Activated CD8-positive, alpha-beta T cell treated with anti-CD3 and anti-CD28 coated beads for 36 hours (primary cell): ENCODE measurements at regions of chr7 and their contacts with region 1.

Region 1: GRCh38 chr7:24819916-24820689 is 62.8 kb upstream of the GSDME start:
- DNase-seq: peak; percentile 91
- ATAC-seq: peak; percentile 49
- H3K4me3 Mint-ChIP-seq: peak overlapping the region; percentile 50
- H3K27ac Mint-ChIP-seq: peak overlapping the region; percentile 97
- H3K4me1 Mint-ChIP-seq: peaks cover 36% of the 10 kb centered on the region
- H3K27me3 Mint-ChIP-seq: no peaks in the 10 kb centered on the region
- CTCF ChIP-seq: peak; percentile 90

Region 2: DNA sequence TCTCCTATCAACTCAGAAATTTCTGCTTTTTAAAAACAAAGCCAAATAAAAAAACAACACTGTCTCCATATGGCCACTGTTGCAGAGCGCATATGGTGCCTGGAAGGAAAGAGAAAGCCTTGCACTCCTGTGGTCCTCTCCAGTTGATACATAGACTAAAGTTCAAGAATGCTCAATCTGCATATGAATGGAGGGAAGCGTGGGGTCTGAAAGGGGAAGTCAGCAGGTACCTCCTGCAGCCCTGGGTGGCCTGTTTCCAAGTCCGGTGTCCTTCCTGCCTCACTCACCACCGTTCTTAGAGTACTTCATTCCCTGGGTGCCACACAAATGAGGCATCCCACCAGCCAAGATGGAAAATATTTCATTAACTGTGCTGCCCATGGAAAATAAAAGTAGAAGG is 385.1 kb before region 1 on chr7:
- CTCF ChIA-PET with region 1: no interaction called
- POLR2A ChIA-PET with region 1: no interaction called
- intact Hi-C with region 1: no loop called
- DNase-seq: no peak
- ATAC-seq: no peak
- H3K4me3 Mint-ChIP-seq: no peak overlapping the region
- H3K27ac Mint-ChIP-seq: no peak overlapping the region
- H3K4me1 Mint-ChIP-seq: no peaks in the 10 kb centered on the region
- H3K27me3 Mint-ChIP-seq: no peaks in the 10 kb centered on the region
- CTCF ChIP-seq: no peak

Region 3: GRCh38 chr7:24732646-24733413 is 87.3 kb before region 1 on chr7:
- CTCF ChIA-PET with region 1: no interaction called
- POLR2A ChIA-PET with region 1: no interaction called
- intact Hi-C with region 1: no loop called
- DNase-seq: peak; percentile 16
- ATAC-seq: no peak
- H3K4me3 Mint-ChIP-seq: no peak overlapping the region
- H3K27ac Mint-ChIP-seq: no peak overlapping the region
- H3K4me1 Mint-ChIP-seq: peaks cover 22% of the 10 kb centered on the region
- H3K27me3 Mint-ChIP-seq: peaks cover 32% of the 10 kb centered on the region
- CTCF ChIP-seq: no peak

Region 4: GRCh38 chr7:24831240-24831639 is 11.1 kb after region 1 on chr7:
- CTCF ChIA-PET with region 1: interaction called, 21 read pairs
- POLR2A ChIA-PET with region 1: no interaction called
- intact Hi-C with region 1: no loop called
- DNase-seq: no peak
- ATAC-seq: no peak
- H3K4me3 Mint-ChIP-seq: no peak overlapping the region
- H3K27ac Mint-ChIP-seq: no peak overlapping the region
- H3K4me1 Mint-ChIP-seq: peaks cover 55% of the 10 kb centered on the region
- H3K27me3 Mint-ChIP-seq: no peaks in the 10 kb centered on the region
- CTCF ChIP-seq: no peak

Region 5: DNA sequence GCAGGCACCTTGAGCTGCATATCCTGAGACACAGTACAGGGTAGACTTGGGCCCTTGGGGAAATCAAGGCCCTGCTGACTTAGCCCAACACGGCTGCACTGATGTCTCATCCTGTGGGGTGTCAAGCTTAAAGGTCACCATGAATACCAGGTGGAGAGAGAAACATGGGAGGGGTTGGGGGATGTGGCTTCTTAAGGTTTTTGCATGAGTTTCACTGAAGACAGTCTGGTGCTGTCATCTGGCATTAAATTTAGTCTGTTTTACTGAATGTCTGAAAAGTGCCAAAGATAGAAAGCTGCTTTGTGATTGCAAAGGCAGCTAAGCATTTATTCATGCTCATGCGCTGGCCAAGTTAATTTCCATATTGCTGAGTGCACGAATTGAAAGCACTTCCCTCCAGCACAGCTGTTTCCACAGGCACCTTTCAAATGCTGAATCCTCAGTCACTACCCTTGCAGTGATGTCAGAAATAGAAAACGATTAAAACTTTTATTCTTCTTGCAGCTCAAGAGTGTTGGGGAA is 57.7 kb after region 1 on chr7:
- CTCF ChIA-PET with region 1: interaction called, 11 read pairs
- POLR2A ChIA-PET with region 1: no interaction called
- intact Hi-C with region 1: no loop called
- DNase-seq: peak; percentile 67
- ATAC-seq: peak; percentile 95
- H3K4me3 Mint-ChIP-seq: peak overlapping the region; percentile 34
- H3K27ac Mint-ChIP-seq: peak overlapping the region; percentile 79
- H3K4me1 Mint-ChIP-seq: peaks cover 37% of the 10 kb centered on the region
- H3K27me3 Mint-ChIP-seq: no peaks in the 10 kb centered on the region
- CTCF ChIP-seq: no peak

Region 6: GRCh38 chr7:24907311-24907886 is 87.3 kb after region 1 on chr7:
- CTCF ChIA-PET with region 1: interaction called, 7 read pairs
- POLR2A ChIA-PET with region 1: interaction called, 5 read pairs
- intact Hi-C with region 1: loop called (anchors 2 kb)
- DNase-seq: peak; percentile 43
- ATAC-seq: peak; percentile 73
- H3K4me3 Mint-ChIP-seq: no peak overlapping the region
- H3K27ac Mint-ChIP-seq: no peak overlapping the region
- H3K4me1 Mint-ChIP-seq: peaks cover 51% of the 10 kb centered on the region
- H3K27me3 Mint-ChIP-seq: no peaks in the 10 kb centered on the region
- CTCF ChIP-seq: no peak

Region 7: GRCh38 chr7:24979863-24980533 is 159.9 kb after region 1 on chr7 and contains the start of gene OSBPL3:
- CTCF ChIA-PET with region 1: interaction called, 72 read pairs
- POLR2A ChIA-PET with region 1: interaction called, 19 read pairs
- intact Hi-C with region 1: loop called (anchors 2 kb)
- DNase-seq: peak; percentile 96
- ATAC-seq: peak; percentile 90
- H3K4me3 Mint-ChIP-seq: peak within 1 kb of the TSS; percentile 83
- H3K27ac Mint-ChIP-seq: peak within 1 kb of the TSS; percentile 89
- H3K4me1 Mint-ChIP-seq: peaks cover 53% of the 10 kb centered on the region
- H3K27me3 Mint-ChIP-seq: no peaks in the 10 kb centered on the region
- CTCF ChIP-seq: peak; percentile 7
- total RNA-seq, gene OSBPL3: 44.6 to 45.7 TPM

Region 8: DNA sequence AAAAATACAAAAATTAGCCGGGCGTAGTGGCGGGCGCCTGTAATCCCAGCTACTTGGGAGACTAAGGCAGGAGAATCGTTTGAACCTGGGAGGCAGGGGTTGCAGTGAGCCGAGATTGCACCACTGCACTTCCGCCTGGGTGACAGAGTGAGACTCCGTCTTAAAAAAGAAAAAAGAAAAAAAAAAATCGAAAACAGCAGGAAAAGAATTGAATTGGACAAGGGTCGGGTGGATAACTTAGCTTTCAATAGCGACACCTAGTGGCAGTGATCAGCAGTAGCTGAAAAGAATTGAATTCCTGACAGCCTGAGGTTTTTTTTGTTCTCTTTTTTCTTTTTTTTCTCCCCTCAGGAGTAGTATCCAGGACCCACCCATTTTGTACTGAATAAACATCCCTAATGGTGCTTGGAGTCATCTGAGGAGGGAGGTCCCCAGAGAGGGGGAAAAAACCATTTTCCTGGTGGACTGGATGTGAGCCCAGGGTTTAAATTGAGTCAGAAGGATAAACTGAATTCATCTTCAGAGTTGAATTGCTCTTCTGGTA is 249.9 kb after region 1 on chr7:
- CTCF ChIA-PET with region 1: interaction called, 56 read pairs
- POLR2A ChIA-PET with region 1: no interaction called
- intact Hi-C with region 1: loop called (anchors 2 kb)
- DNase-seq: peak; percentile 54
- ATAC-seq: peak; percentile 71
- H3K4me3 Mint-ChIP-seq: no peak overlapping the region
- H3K27ac Mint-ChIP-seq: no peak overlapping the region
- H3K4me1 Mint-ChIP-seq: peaks cover 9% of the 10 kb centered on the region
- H3K27me3 Mint-ChIP-seq: peaks cover 2% of the 10 kb centered on the region
- CTCF ChIP-seq: peak; percentile 96

Region 9: GRCh38 chr7:25098096-25099046 is 278.3 kb after region 1 on chr7:
- CTCF ChIA-PET with region 1: interaction called, 49 read pairs
- POLR2A ChIA-PET with region 1: interaction called, 5 read pairs
- intact Hi-C with region 1: loop called (anchors 2 kb)
- DNase-seq: peak; percentile 74
- ATAC-seq: peak; percentile 80
- H3K4me3 Mint-ChIP-seq: no peak overlapping the region
- H3K27ac Mint-ChIP-seq: no peak overlapping the region
- H3K4me1 Mint-ChIP-seq: peaks cover 11% of the 10 kb centered on the region
- H3K27me3 Mint-ChIP-seq: peaks cover 2% of the 10 kb centered on the region
- CTCF ChIP-seq: peak; percentile 96